H1 (cell line): ENCODE measurements at regions of chr6 and their contacts with region 1.

Region 1: GRCh38 chr6:166078294-166078693 is 89.4 kb downstream of the TBXT start:
- DNase-seq: no peak
- H3K4me3 ChIP-seq: no peak overlapping the region
- H3K27ac ChIP-seq: no peak overlapping the region
- H3K4me1 ChIP-seq: no peaks in the 10 kb centered on the region
- H3K27me3 ChIP-seq: no peaks in the 10 kb centered on the region
- CTCF ChIP-seq: no peak
- EP300 ChIP-seq: no peak
- POLR2A ChIP-seq: no peak
- RAD21 ChIP-seq: no peak

Region 2: DNA sequence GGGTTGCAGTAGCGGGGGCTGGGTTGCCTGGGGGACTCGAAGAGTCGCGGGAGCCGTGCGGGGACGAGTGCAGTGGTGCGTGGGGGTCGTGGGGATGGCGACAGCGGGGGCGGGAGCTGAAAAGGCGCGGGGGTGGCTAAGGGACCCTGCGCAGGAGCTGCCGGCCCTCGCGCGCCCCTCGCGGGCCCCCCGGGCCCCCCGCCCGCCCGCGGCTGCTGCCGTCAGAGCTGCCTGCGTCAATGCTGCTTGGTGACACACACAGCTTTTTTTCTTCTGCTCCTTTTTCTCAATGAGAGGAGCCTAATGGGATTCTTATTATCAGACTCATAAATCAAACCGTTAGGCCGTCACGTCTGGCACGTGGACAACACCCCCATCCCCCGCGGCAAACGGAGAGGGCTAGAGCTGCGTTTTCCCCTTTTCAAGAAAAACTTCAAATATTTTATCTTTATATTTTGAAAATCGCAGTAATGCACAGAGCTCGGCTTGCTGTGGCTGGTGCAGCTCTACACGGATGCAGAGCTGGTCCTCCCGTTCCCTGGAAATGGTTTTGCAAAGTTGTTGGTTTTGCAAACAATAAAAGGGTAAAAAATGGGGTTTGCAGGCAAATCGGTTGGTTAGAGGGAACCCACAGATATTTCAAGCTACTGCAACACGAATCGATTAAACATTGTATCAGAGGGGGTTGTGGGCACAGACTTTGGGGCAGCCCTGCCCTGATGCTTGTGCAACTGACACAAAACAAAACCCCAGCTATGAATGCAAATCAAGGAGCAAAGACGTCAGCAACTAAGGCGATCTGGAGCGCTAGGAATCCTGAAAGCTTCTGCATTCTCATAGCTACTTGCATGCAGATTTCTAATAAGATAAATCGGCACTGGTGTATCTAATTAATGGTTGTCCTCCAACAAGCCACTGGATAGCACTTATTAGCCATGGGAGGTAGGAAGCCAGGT is 72.1 kb before region 1 on chr6:
- CTCF ChIA-PET with region 1: interaction called, 10 read pairs
- POLR2A ChIA-PET with region 1: interaction called, 3 read pairs
- DNase-seq: peak in 1 of 2 experiments; percentile 43
- H3K4me3 ChIP-seq: peak overlapping the region; percentile 14 to 55 (median 27); a peak in 7 of 8 replicates
- H3K27ac ChIP-seq: no peak overlapping the region
- H3K4me1 ChIP-seq: peaks cover 3 to 16% (median 11%) of the 10 kb centered on the region in 4 experiments
- H3K27me3 ChIP-seq: peaks cover 44 to 77% (median 67%) of the 10 kb centered on the region in 4 experiments
- CTCF ChIP-seq: no peak
- EP300 ChIP-seq: no peak
- POLR2A ChIP-seq: no peak
- RAD21 ChIP-seq: no peak

Region 3: DNA sequence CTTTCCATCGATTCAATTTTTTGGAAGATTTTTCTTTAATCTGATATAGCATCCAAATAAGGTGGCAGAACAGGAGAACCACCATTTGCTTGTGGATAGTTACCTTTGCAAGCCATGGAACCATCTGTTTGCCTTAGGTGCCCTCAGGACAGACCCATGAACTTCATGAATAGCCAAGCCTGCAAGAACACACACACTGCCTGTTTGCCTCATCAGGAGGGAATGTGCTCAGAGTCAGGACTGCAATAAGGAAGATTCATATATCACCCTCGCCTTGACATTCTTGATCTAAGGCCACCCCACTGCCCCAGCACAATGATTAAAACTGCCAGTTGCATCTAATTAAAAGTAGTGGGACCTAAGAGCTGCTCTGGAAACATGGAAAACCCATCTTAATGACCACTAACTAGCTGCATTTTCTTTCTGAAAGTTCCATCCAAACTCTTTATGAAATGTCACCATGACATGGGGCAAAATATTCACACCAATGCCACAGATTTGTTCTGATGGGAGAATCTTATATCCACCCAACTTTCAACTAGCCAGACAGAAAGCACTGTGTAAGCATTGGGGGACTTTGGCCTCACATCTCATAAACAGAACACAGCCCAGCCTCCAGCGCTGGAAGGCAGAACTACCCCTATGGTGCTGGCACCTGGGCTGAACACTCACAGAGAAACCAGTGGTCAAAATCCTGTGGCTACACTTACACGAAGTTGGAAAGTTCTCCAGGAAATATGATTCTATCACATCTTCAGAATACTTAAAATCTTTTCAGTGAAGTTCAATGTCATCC is 41.0 kb after region 1 on chr6:
- CTCF ChIA-PET with region 1: no interaction called
- POLR2A ChIA-PET with region 1: no interaction called
- DNase-seq: no peak
- H3K4me3 ChIP-seq: no peak overlapping the region
- H3K27ac ChIP-seq: no peak overlapping the region
- H3K4me1 ChIP-seq: no peaks in the 10 kb centered on the region
- H3K27me3 ChIP-seq: no peaks in the 10 kb centered on the region
- CTCF ChIP-seq: no peak
- EP300 ChIP-seq: no peak
- POLR2A ChIP-seq: no peak
- RAD21 ChIP-seq: no peak